ENCODE measurements at regions of chr5 and their contacts with region 1.

Region 1: GRCh38 chr5:139633295-139634027 is 14.7 kb upstream of the CXXC5 start:
- DNase-seq: peak in 8 of 9 experiments; percentile 45 to 85 (median 71)
- ATAC-seq: peak; percentile 35
- H3K4me3 ChIP-seq: no peak overlapping the region
- H3K4me3 Mint-ChIP-seq: no peak overlapping the region
- H3K27ac ChIP-seq: no peak overlapping the region
- H3K27ac Mint-ChIP-seq: peak overlapping the region; percentile 24
- H3K4me1 ChIP-seq: peaks cover 42% of the 10 kb centered on the region
- H3K4me1 Mint-ChIP-seq: peaks cover 41% of the 10 kb centered on the region
- H3K27me3 ChIP-seq: no peaks in the 10 kb centered on the region
- H3K27me3 Mint-ChIP-seq: no peaks in the 10 kb centered on the region
- CTCF ChIP-seq: peak; percentile 89

Region 2: GRCh38 chr5:139517683-139518564 is 115.5 kb before region 1 on chr5:
- CTCF ChIA-PET with region 1: interaction called, 10 read pairs
- POLR2A ChIA-PET with region 1: no interaction called
- intact Hi-C with region 1: loop called in 1 of 2 experiments (anchors 2 kb)
- DNase-seq: peak; percentile 82 to 97 (median 90)
- ATAC-seq: peak; percentile 92
- H3K4me3 ChIP-seq: peak overlapping the region; percentile 58 to 63
- H3K4me3 Mint-ChIP-seq: peak overlapping the region; percentile 88
- H3K27ac ChIP-seq: peak overlapping the region; percentile 60 to 79
- H3K27ac Mint-ChIP-seq: peak overlapping the region; percentile 96
- H3K4me1 ChIP-seq: peaks cover 11% of the 10 kb centered on the region
- H3K4me1 Mint-ChIP-seq: peaks cover 23% of the 10 kb centered on the region
- H3K27me3 ChIP-seq: no peaks in the 10 kb centered on the region
- H3K27me3 Mint-ChIP-seq: no peaks in the 10 kb centered on the region
- CTCF ChIP-seq: peak; percentile 96

Region 3: DNA sequence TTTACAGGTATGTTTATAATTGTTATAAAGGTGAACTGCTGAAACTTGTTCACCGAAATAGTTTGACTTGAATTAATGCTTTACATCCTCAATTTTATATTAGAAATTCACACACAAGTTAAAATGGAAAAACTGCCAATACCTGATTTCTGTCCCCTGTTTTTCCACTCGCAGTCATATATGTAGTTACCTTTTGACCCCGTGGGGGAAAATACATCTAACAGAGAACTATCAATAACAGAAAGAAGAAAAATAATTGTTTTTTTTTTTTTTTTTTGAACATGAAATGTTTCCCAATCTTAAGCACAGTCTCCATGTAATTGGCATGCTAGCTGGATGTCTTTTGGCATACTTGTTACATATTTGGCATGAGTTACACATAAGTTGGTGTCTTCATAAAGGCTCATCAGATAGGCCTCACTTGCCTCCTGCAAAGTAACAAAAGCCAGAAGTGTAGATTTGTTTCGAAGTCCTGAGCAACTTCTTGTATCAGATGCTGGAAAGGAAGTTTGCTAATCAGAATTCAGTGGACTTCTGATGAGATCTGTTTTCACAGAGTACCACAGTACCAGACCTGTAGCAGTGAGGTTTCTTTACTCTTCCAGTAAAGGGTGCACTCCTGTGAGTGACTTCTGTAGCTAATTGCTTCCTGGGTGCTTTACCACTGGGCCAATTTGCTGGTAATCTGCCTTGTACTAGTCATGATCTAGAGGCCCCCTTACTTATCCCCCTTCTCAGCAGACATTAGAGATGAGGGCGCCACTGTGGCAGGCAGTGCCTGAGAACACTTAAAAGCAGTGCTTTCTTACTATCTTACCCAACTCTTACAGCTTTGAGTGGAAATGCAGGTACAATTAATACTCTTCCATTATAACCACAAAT is 21.5 kb before region 1 on chr5:
- CTCF ChIA-PET with region 1: interaction called, 11 read pairs
- POLR2A ChIA-PET with region 1: no interaction called
- intact Hi-C with region 1: no loop called
- DNase-seq: peak in 1 of 9 experiments; percentile 11
- ATAC-seq: peak; percentile 54
- H3K4me3 ChIP-seq: no peak overlapping the region
- H3K4me3 Mint-ChIP-seq: no peak overlapping the region
- H3K27ac ChIP-seq: peak overlapping the region in 1 of 2 experiments; percentile 30
- H3K27ac Mint-ChIP-seq: peak overlapping the region; percentile 76
- H3K4me1 ChIP-seq: peaks cover 5% of the 10 kb centered on the region
- H3K4me1 Mint-ChIP-seq: peaks cover 42% of the 10 kb centered on the region
- H3K27me3 ChIP-seq: no peaks in the 10 kb centered on the region
- H3K27me3 Mint-ChIP-seq: no peaks in the 10 kb centered on the region
- CTCF ChIP-seq: no peak

Region 4: GRCh38 chr5:139684881-139685749 is 51.7 kb after region 1 on chr5:
- CTCF ChIA-PET with region 1: interaction called, 150 read pairs
- POLR2A ChIA-PET with region 1: interaction called, 10 read pairs
- intact Hi-C with region 1: loop called (anchors 1 kb)
- DNase-seq: no peak
- ATAC-seq: no peak
- H3K4me3 ChIP-seq: no peak overlapping the region
- H3K4me3 Mint-ChIP-seq: no peak overlapping the region
- H3K27ac ChIP-seq: no peak overlapping the region
- H3K27ac Mint-ChIP-seq: no peak overlapping the region
- H3K4me1 ChIP-seq: peaks cover 11% of the 10 kb centered on the region
- H3K4me1 Mint-ChIP-seq: peaks cover 33% of the 10 kb centered on the region
- H3K27me3 ChIP-seq: no peaks in the 10 kb centered on the region
- H3K27me3 Mint-ChIP-seq: no peaks in the 10 kb centered on the region
- CTCF ChIP-seq: no peak

Region 5: DNA sequence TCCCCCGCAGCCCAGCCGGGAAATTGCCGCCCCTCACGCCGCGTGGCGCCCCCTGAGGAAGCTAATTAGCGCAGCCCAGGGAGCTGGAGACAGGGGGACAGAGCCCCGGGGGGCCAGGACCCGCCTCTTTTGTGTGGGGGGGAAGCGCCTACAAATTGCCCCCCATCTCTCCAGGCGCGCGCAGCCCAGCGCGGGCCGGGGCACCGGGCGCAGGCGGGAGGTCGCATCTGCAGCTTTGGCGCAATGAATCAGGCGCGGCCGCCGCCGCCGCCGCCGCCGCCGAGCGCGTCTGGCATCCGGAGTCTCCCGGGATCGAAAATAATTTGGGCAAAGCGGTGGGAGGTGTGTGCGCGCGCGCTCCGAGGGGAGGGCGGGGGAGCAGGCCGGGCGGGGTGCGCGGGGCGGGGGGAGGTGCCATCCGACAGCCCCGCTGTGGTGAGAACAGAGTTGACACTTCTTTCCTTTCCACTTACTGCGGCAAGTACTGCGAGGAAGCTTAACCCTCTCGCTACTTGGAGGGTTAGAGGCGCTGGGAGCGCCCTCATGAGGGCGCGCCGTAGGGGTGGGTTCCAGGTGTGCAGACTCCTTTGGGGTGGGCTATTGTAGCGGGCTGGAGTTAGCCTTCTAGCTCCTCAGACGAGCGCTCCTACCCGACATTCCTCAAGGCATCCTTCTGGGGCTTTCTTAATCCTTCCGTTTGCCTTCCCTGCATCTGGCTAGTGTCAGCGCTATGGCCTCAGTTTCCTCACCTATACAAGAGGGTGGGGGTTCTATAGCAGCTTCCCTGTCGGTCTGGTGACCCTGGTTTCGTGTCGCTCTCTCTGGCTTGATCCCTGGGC is 77.8 kb after region 1 on chr5:
- CTCF ChIA-PET with region 1: interaction called, 6 read pairs
- POLR2A ChIA-PET with region 1: interaction called, 16 read pairs
- intact Hi-C with region 1: loop called (anchors 1 kb)
- DNase-seq: peak; percentile 32 to 90 (median 71)
- ATAC-seq: peak; percentile 60
- H3K4me3 ChIP-seq: peak overlapping the region; percentile 63 to 64
- H3K4me3 Mint-ChIP-seq: peak overlapping the region; percentile 77
- H3K27ac ChIP-seq: peak overlapping the region; percentile 66 to 84
- H3K27ac Mint-ChIP-seq: no peak overlapping the region
- H3K4me1 ChIP-seq: peaks cover 28% of the 10 kb centered on the region
- H3K4me1 Mint-ChIP-seq: peaks cover 39% of the 10 kb centered on the region
- H3K27me3 ChIP-seq: no peaks in the 10 kb centered on the region
- H3K27me3 Mint-ChIP-seq: no peaks in the 10 kb centered on the region
- CTCF ChIP-seq: no peak

Region 6: DNA sequence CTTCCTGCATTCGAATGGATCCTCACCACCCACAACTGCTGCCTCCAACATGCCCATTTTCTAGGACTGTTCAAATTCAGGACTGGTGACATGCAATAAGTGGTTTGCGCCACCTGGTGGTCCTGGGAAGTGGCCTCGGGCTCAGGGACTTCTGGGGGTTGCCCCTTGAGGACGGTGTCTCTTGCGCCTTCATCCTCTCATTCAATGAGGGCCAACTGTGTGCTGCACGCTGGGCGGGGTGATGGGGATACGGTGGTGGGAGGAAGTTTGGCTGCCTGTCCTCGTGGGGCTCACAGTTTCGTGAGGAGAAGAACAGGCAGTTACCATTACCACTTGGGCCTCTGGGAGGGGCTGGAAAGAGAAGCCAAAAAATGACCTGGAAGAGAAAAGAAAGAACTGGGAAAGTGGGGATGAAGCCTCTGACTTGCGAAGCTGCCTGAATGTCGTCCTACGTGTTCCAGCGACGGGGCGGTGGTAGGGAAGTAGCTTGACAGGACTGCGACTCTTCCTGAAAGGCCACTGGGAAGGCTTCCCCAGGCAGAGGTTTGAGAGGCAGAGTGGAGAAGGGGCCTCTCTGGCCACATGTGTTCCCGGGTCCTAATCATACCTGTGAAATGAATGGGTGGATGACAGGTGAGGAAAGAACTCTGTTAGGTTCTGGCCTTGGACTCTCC is 211.1 kb after region 1 on chr5:
- CTCF ChIA-PET with region 1: no interaction called
- POLR2A ChIA-PET with region 1: no interaction called
- intact Hi-C with region 1: loop called in 1 of 2 experiments (anchors 5 kb)
- DNase-seq: peak; percentile 50 to 83 (median 77)
- ATAC-seq: peak; percentile 24
- H3K4me3 ChIP-seq: no peak overlapping the region
- H3K4me3 Mint-ChIP-seq: no peak overlapping the region
- H3K27ac ChIP-seq: no peak overlapping the region
- H3K27ac Mint-ChIP-seq: no peak overlapping the region
- H3K4me1 ChIP-seq: no peaks in the 10 kb centered on the region
- H3K4me1 Mint-ChIP-seq: peaks cover 15% of the 10 kb centered on the region
- H3K27me3 ChIP-seq: no peaks in the 10 kb centered on the region
- H3K27me3 Mint-ChIP-seq: peaks cover 18% of the 10 kb centered on the region
- CTCF ChIP-seq: peak; percentile 76

Region 7: GRCh38 chr5:139919308-139919707 is 285.8 kb after region 1 on chr5:
- CTCF ChIA-PET with region 1: no interaction called
- POLR2A ChIA-PET with region 1: no interaction called
- intact Hi-C with region 1: no loop called
- DNase-seq: no peak
- ATAC-seq: no peak
- H3K4me3 ChIP-seq: no peak overlapping the region
- H3K4me3 Mint-ChIP-seq: no peak overlapping the region
- H3K27ac ChIP-seq: no peak overlapping the region
- H3K27ac Mint-ChIP-seq: no peak overlapping the region
- H3K4me1 ChIP-seq: no peaks in the 10 kb centered on the region
- H3K4me1 Mint-ChIP-seq: no peaks in the 10 kb centered on the region
- H3K27me3 ChIP-seq: peaks cover 3 to 4% of the 10 kb centered on the region in 2 experiments
- H3K27me3 Mint-ChIP-seq: peaks cover 15% of the 10 kb centered on the region
- CTCF ChIP-seq: no peak

Region 8: DNA sequence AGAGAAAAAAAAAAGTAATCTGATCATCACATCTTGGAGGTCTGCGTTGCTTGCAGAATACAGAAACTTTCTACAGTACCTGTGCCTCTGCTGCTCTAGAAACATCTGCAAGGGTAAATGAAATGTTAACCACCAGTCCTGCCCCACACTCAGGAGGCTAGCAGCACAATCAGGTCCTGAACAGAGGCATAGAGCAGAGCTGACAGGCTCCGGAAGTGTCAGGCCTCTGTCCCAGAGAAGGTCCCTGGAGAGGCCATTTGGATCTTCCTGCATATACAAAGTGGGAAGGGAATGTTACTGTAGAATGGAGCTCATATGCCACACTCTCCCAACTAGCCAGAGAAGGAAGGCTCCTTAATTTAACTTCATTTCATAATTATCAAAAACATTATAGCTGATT is 402.4 kb after region 1 on chr5:
- CTCF ChIA-PET with region 1: no interaction called
- POLR2A ChIA-PET with region 1: no interaction called
- intact Hi-C with region 1: no loop called
- DNase-seq: no peak
- ATAC-seq: no peak
- H3K4me3 ChIP-seq: no peak overlapping the region
- H3K4me3 Mint-ChIP-seq: no peak overlapping the region
- H3K27ac ChIP-seq: no peak overlapping the region
- H3K27ac Mint-ChIP-seq: no peak overlapping the region
- H3K4me1 ChIP-seq: no peaks in the 10 kb centered on the region
- H3K4me1 Mint-ChIP-seq: peaks cover 6% of the 10 kb centered on the region
- H3K27me3 ChIP-seq: peaks cover 4 to 6% of the 10 kb centered on the region in 2 experiments
- H3K27me3 Mint-ChIP-seq: peaks cover 70% of the 10 kb centered on the region
- CTCF ChIP-seq: no peak

Measured in CD8-positive, alpha-beta T cell (primary cell).